ENCODE measurements at regions of chr14 and their contacts with region 1.

Region 1: GRCh38 chr14:104639889-104640548 is 35.4 kb upstream of the TMEM179 start:
- DNase-seq: no peak
- H3K4me3 ChIP-seq: no peak overlapping the region
- H3K27ac ChIP-seq: no peak overlapping the region
- H3K27me3 ChIP-seq: peaks cover 15% of the 10 kb centered on the region
- CTCF ChIP-seq: peak; percentile 88

Region 2: DNA sequence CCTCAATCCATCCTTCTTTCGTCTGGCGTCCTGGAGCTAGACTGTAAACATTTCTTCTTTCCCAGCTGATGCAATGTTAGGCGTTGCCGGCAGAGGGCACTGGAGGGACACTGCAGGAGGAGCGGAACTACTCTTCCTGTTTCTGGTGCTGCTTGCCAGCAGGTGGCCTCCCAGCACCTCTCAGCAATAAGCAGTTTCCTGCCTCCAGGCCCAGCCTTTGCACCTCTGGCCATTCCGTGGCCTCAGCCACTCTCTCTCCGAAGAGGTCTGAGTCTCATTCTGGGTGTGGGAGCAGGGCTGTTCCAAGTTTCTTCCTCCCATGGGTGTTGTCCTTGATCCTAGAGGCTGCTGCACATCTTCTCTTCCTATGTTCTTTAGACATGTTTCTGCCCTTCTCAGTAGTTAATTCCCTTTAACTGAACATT is 562.0 kb before region 1 on chr14:
- CTCF ChIA-PET with region 1: interaction called, 10 read pairs
- POLR2A ChIA-PET with region 1: no interaction called
- DNase-seq: peak; percentile 54
- H3K4me3 ChIP-seq: no peak overlapping the region
- H3K27ac ChIP-seq: no peak overlapping the region
- H3K27me3 ChIP-seq: no peaks in the 10 kb centered on the region
- CTCF ChIP-seq: peak; percentile 100

Measured in AG04450 (cell line).